Activated CD8-positive, alpha-beta T cell treated with anti-CD3 and anti-CD28 coated beads, Interleukin-2, amount 10 ng/mL, durations not matched to agents 7 days and 5 days (primary cell): ENCODE measurements at regions of chr2 and their contacts with region 1.

Region 1: GRCh38 chr2:96138179-96139145 is at the start of gene ASTL:
- DNase-seq: peak; percentile 76
- ATAC-seq: peak; percentile 48
- H3K4me3 Mint-ChIP-seq: no peak within 1 kb of the TSS
- H3K27ac Mint-ChIP-seq: no peak within 1 kb of the TSS
- H3K4me1 Mint-ChIP-seq: peaks cover 21% of the 10 kb centered on the region
- H3K27me3 Mint-ChIP-seq: no peaks in the 10 kb centered on the region
- total RNA-seq, gene ASTL: 0.34 TPM in 1 of 2 experiments, not detected in the other

Region 2: GRCh38 chr2:96091533-96092334 is 46.7 kb before region 1 on chr2:
- CTCF ChIA-PET with region 1: no interaction called
- POLR2A ChIA-PET with region 1: no interaction called
- DNase-seq: no peak
- ATAC-seq: no peak
- H3K4me3 Mint-ChIP-seq: no peak overlapping the region
- H3K27ac Mint-ChIP-seq: no peak overlapping the region
- H3K4me1 Mint-ChIP-seq: no peaks in the 10 kb centered on the region
- H3K27me3 Mint-ChIP-seq: peaks cover 4% of the 10 kb centered on the region

Region 3: DNA sequence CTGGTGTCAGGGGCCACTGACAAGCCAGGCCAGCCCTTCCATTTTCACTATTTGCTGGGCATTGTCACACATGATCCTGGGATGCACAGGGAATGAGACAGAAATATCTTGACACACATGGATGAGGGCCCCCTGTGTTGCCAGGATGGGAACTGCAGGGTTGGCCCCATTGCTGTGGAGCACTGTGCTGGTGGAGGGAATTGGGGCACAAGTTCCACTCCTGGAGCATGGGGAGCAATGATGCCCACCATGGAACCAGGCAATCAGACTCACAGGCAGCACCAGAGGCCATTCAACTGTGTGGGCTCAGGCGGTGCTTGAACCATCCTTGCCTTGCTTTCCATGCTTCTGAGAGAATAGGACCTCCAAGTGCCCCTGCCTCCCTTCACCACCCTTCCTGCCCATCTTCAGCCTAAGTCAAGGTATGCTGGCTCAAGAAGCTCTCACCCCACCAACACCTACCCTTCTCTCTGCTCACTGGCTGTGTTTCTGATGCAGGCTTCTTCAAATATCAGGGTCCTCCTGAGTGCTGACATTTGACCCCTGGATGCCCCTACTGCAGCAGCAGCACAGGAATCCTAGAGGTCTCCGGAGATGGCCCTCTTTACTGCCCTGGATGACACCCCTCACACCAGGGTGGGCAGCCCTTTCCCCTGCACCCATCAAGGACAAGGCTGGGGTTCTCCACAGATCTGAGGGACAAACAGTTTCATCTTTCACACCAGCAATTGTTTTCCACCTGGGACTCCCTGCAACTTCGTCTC is 33.1 kb before region 1 on chr2:
- CTCF ChIA-PET with region 1: no interaction called
- POLR2A ChIA-PET with region 1: no interaction called
- DNase-seq: no peak
- ATAC-seq: no peak
- H3K4me3 Mint-ChIP-seq: no peak overlapping the region
- H3K27ac Mint-ChIP-seq: no peak overlapping the region
- H3K4me1 Mint-ChIP-seq: peaks cover under 1% of the 10 kb centered on the region
- H3K27me3 Mint-ChIP-seq: no peaks in the 10 kb centered on the region

Region 4: GRCh38 chr2:96116879-96117697 is 21.4 kb before region 1 on chr2:
- CTCF ChIA-PET with region 1: interaction called, 26 read pairs
- POLR2A ChIA-PET with region 1: no interaction called
- DNase-seq: peak; percentile 64
- ATAC-seq: peak; percentile 88
- H3K4me3 Mint-ChIP-seq: peak overlapping the region; percentile 40
- H3K27ac Mint-ChIP-seq: no peak overlapping the region
- H3K4me1 Mint-ChIP-seq: peaks cover 30% of the 10 kb centered on the region
- H3K27me3 Mint-ChIP-seq: peaks cover 33% of the 10 kb centered on the region

Region 5: DNA sequence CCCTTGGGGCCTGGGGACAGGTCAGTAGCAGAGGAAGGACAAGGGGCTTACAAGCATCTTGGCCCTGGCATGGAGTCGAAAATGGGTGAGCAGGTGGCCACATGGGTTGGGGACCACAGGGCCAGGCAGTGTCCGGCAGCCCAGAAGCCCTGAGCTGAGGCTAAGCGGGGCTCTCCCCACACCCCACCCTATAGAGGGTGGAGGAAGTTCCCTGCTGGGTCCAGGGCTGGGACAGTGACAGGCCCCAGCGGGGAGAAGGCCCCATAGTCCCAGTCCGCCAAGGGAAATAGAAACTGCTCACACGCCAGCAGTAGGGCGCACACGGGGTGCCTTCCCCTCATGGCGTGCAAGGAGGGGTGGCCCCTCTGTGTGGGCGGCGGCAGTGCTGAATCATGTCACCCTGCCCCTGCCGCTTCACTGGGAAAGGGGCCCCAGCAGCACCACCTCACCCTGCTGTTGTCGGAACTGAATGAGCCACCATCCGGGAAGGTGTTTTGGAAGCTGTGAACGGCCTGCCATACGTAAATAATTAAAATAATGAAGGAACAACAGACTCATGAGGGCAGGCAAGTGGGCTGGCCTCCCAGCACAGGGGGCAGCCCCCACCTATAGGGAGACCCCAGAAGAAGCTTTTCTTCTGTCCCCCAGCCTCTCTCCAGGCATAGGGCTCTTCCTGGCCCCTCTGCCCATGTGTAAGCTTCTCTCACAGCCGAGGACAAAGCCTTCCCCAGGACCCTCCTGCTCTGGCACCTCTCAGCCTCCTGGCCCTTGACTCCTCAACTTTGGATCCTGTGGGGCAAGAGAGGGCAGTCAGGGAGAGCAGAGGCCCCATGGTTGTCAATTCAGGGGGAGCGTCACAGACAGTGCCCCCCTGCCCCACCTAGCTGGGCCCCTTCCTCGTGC is 19.4 kb after region 1 on chr2:
- CTCF ChIA-PET with region 1: interaction called, 18 read pairs
- POLR2A ChIA-PET with region 1: interaction called, 193 read pairs
- DNase-seq: peak; percentile 76
- ATAC-seq: peak; percentile 76
- H3K4me3 Mint-ChIP-seq: peak overlapping the region; percentile 47
- H3K27ac Mint-ChIP-seq: peak overlapping the region; percentile 77
- H3K4me1 Mint-ChIP-seq: peaks cover 66% of the 10 kb centered on the region
- H3K27me3 Mint-ChIP-seq: no peaks in the 10 kb centered on the region

Region 6: DNA sequence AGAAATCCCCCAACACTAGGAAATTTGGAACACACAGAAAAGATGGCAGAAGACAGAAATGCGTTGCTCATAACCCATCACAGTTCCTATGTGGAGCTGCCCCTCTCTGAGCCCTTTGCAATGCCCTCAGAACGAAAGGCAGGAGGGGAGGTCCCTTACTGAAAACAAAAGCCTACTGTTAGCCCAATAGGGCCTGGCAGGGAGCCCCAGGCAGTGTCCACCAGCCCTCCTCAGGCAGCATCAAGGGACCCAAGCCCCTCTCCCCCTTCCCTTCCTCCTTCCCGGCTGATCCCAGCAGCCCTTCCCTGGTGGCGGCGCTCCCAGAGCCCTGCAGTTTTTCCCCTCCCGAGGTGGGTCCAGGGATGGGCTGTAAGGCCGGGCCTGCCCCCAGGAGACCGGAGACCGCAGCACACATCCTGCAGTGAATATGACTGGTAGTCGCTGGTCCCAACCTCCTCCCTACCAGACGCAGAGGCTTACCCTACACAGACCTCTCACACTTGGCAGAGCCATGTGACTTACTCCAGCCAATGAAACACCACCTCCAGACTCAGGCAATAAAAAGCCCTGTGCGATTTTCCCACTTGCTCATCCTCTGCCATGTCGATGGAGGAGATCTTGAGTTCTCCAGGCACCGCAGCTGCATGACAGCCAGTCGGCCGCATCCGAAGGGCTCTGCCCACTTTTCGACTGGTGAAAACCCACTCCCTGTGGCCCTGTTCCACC is 26.2 kb after region 1 on chr2:
- CTCF ChIA-PET with region 1: interaction called, 674 read pairs
- POLR2A ChIA-PET with region 1: interaction called, 193 read pairs
- DNase-seq: peak; percentile 86
- ATAC-seq: peak; percentile 85
- H3K4me3 Mint-ChIP-seq: peak overlapping the region; percentile 60
- H3K27ac Mint-ChIP-seq: peak overlapping the region; percentile 99
- H3K4me1 Mint-ChIP-seq: peaks cover 44% of the 10 kb centered on the region
- H3K27me3 Mint-ChIP-seq: no peaks in the 10 kb centered on the region

Region 7: GRCh38 chr2:96202152-96202854 is 63.8 kb after region 1 on chr2:
- CTCF ChIA-PET with region 1: interaction called, 12 read pairs
- POLR2A ChIA-PET with region 1: no interaction called
- DNase-seq: no peak
- ATAC-seq: no peak
- H3K4me3 Mint-ChIP-seq: no peak overlapping the region
- H3K27ac Mint-ChIP-seq: no peak overlapping the region
- H3K4me1 Mint-ChIP-seq: peaks cover 74% of the 10 kb centered on the region
- H3K27me3 Mint-ChIP-seq: no peaks in the 10 kb centered on the region

Region 8: GRCh38 chr2:96260404-96261260 is 122.2 kb after region 1 on chr2:
- CTCF ChIA-PET with region 1: interaction called, 17 read pairs
- POLR2A ChIA-PET with region 1: interaction called, 3 read pairs
- DNase-seq: peak; percentile 57
- ATAC-seq: peak; percentile 43
- H3K4me3 Mint-ChIP-seq: no peak overlapping the region
- H3K27ac Mint-ChIP-seq: peak overlapping the region; percentile 53
- H3K4me1 Mint-ChIP-seq: peaks cover 72% of the 10 kb centered on the region
- H3K27me3 Mint-ChIP-seq: no peaks in the 10 kb centered on the region

Region 9: GRCh38 chr2:96265840-96266679 is 127.6 kb after region 1 on chr2 and contains the starts of genes CIAO1 and TMEM127:
- CTCF ChIA-PET with region 1: interaction called, 17 read pairs
- POLR2A ChIA-PET with region 1: interaction called, 3 read pairs
- DNase-seq: peak; percentile 99
- ATAC-seq: peak; percentile 94
- H3K4me3 Mint-ChIP-seq: peak within 1 kb of the TSS; percentile 97
- H3K27ac Mint-ChIP-seq: peak within 1 kb of the TSS; percentile 91
- H3K4me1 Mint-ChIP-seq: peaks cover 52% of the 10 kb centered on the region
- H3K27me3 Mint-ChIP-seq: no peaks in the 10 kb centered on the region
- total RNA-seq, gene CIAO1: 64.9 to 65.9 TPM
- total RNA-seq, gene TMEM127: 31.8 to 34.2 TPM

Region 10: DNA sequence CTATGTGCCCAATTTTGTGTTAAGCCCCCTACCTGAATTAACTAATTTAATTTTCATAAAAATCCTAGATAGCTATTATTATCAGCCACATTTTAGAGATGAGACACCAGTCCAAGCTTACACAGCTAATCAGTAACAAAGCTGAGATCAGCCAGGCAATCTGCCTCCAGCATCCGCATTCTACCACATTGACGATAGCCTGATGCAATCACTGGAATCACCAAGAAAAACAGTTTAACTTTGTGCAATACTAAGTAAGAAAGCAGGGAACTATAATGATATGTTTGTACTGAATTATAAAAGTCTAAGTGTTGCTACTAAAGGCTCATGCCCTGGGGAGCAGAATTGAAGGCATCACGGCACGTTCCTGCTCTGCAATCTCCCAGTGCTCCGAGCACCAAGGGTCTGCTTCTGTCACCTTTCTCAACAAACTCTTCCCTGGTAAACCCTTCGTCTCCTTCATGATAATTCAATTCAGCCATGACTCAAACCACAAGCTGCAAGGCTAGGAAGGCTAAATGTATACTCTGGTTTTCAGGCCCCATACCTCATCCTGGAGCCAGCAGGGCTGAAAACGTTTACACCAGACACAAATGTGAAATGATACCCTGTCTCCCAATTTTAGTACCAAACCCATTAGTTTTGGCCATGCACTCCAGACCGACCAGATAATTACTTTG is 480.3 kb after region 1 on chr2:
- CTCF ChIA-PET with region 1: no interaction called
- POLR2A ChIA-PET with region 1: no interaction called
- DNase-seq: no peak
- ATAC-seq: no peak
- H3K4me3 Mint-ChIP-seq: no peak overlapping the region
- H3K27ac Mint-ChIP-seq: peak overlapping the region; percentile 4
- H3K4me1 Mint-ChIP-seq: peaks cover 39% of the 10 kb centered on the region
- H3K27me3 Mint-ChIP-seq: no peaks in the 10 kb centered on the region